Activated CD4-positive, alpha-beta T cell treated with anti-CD3 and anti-CD28 coated beads, Interleukin-2, amount 10 ng/mL, durations not matched to agents 24 days and 14 days (primary cell): ENCODE measurements at regions of chr5 and their contacts with region 1.

Region 1: DNA sequence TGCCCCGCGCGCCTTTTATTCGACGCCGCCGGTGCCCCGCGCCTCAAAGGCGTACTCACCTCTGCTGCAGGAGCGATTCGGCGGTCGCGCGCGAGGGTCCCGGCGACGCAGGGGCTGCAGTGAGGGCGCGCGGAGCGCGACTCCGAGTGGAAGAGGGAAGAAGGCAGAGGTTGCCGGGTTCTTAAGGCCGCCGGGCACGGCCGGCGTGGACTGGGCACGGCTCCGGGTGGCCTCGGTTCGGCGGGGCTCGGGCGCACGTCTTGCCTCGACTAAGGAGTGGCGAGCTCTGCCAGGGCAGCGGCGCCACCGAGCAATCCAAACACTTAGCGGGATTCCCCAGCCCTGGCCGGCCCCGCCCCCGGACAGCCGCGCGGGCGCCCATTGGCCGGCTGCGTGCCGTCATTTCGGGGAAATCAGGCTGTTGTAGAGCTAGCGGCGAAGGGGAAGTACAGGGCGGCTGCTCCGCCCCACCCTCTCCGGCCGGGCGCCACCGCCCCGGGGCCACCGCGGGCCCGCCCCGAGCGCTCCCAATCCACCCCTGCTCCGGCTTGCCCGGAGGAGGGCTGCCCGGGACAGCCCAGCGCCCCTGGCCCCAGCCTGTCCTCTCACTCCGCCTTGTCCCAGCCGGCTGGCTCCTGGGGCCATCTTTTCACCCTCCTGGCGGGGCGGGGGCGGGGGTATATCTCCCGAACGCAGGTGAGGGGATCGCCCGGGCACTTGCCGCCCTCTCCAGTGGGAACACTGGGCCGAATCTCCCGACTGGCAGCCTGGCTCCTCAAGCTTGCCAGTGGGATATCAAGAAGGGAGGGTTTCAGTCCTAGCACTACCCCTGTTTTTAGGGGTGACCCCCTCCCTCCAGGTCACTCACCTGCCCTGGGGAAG is at the start of gene IRF1:
- DNase-seq: peak; percentile 100
- H3K4me3 Mint-ChIP-seq: peak within 1 kb of the TSS; percentile 99
- H3K27ac Mint-ChIP-seq: peak within 1 kb of the TSS; percentile 94
- H3K4me1 Mint-ChIP-seq: peaks cover 70% of the 10 kb centered on the region
- H3K27me3 Mint-ChIP-seq: no peaks in the 10 kb centered on the region
- total RNA-seq, gene IRF1: 167 and 181 TPM in 2 replicates

Region 2: GRCh38 chr5:132044207-132044606 is 446.5 kb before region 1 on chr5:
- intact Hi-C with region 1: no loop called
- DNase-seq: no peak
- H3K4me3 Mint-ChIP-seq: no peak overlapping the region
- H3K27ac Mint-ChIP-seq: no peak overlapping the region
- H3K4me1 Mint-ChIP-seq: peaks cover 10% of the 10 kb centered on the region
- H3K27me3 Mint-ChIP-seq: peaks cover 40% of the 10 kb centered on the region

Region 3: GRCh38 chr5:132114150-132115121 is 376.3 kb before region 1 on chr5:
- intact Hi-C with region 1: loop called (anchors 10 kb)
- DNase-seq: peak; percentile 58
- H3K4me3 Mint-ChIP-seq: peak overlapping the region; percentile 32
- H3K27ac Mint-ChIP-seq: peak overlapping the region; percentile 63
- H3K4me1 Mint-ChIP-seq: peaks cover 56% of the 10 kb centered on the region
- H3K27me3 Mint-ChIP-seq: no peaks in the 10 kb centered on the region

Region 4: GRCh38 chr5:132419502-132420468 is 70.9 kb before region 1 on chr5:
- intact Hi-C with region 1: loop called (anchors 1 kb)
- DNase-seq: peak; percentile 90
- H3K4me3 Mint-ChIP-seq: peak overlapping the region; percentile 72
- H3K27ac Mint-ChIP-seq: peak overlapping the region; percentile 87
- H3K4me1 Mint-ChIP-seq: peaks cover 79% of the 10 kb centered on the region
- H3K27me3 Mint-ChIP-seq: no peaks in the 10 kb centered on the region

Region 5: GRCh38 chr5:132456296-132457001 is 34.3 kb before region 1 on chr5:
- intact Hi-C with region 1: loop called (anchors 5 kb)
- DNase-seq: peak; percentile 90
- H3K4me3 Mint-ChIP-seq: peak overlapping the region; percentile 74
- H3K27ac Mint-ChIP-seq: peak overlapping the region; percentile 99
- H3K4me1 Mint-ChIP-seq: peaks cover 84% of the 10 kb centered on the region
- H3K27me3 Mint-ChIP-seq: no peaks in the 10 kb centered on the region

Region 6: DNA sequence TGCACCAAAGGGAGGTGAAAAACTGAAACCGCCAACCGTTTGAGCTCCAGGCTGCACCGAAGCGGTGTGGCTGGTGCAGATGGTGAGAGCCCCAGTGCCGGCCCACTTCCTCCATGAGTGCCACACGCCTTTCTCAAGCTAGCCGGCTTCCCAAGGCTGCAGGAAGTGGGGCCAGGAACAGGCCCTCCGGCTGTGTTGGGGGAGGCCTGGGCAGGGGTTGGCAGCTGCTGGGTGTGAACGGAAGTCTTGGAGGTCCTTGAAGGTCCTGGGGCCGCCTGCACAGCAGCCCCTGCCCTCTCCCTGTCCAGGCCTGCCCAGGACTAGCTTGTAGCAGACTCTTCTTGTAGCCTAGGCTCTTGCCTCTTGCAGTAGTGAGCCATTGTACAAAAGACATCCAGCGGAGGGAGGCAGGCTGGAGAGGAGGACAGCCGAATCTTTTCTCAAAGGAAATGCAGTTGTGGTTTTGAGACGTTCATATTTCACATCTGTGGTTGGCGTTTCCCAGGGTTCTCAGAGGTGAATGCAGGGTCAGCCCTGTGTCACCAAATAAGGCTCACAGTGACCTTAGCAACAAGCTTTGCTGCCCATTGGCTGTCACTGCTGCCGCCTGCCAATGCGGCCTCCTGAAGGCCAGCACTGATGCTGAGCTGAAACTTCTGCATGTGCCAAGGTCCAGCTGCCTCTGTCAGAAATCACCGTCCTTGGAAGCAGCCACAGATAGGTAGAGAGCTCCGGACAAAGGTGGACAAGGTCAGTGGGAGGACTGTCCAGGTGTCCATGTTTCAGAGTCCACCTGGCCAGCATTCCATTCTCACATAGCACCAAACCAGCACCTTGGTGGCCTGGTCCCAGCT is 24.1 kb before region 1 on chr5:
- intact Hi-C with region 1: loop called (anchors 1 kb)
- DNase-seq: peak; percentile 93
- H3K4me3 Mint-ChIP-seq: peak overlapping the region; percentile 64
- H3K27ac Mint-ChIP-seq: peak overlapping the region; percentile 80
- H3K4me1 Mint-ChIP-seq: peaks cover 81% of the 10 kb centered on the region
- H3K27me3 Mint-ChIP-seq: no peaks in the 10 kb centered on the region

Region 7: DNA sequence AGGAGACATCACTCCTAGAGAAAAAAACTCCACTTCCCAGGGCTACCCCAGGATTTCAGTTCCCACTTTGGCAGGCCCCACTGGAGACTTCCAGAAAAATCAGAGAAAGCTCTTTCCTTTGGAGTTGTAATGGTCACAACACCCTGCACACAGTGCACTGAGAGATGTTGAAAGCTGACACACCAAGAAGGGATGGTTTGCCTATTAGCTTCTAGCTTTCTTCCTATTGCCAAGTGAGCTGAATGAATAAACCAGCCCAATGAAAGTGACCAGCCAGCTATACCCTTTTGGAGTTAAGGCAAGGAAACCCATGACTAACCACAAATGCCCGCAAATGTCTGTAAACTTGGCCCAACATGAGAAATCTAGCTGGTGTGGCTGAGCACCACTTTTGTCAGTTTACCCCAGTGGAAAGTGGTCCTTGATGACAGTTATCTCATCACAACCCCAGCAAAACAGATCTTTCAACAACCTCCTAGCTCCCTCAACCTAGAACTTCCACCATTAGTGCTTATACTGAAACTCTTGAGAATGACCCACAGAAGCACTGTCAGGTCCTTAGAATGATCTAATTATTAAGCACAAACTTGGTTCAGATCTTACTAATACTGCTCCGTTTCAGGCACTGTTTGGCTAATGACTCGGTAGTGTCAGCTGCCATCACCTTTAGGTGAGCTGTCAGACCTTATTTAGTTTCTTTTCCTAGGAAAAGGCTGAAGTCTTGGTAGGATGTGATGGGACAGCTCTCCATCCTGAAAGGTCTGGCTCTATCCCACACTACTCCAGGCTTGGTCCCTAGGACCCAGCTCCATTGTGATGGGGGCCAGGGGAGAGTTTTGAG is 11.4 kb before region 1 on chr5:
- intact Hi-C with region 1: loop called (anchors 1 kb)
- DNase-seq: peak; percentile 72
- H3K4me3 Mint-ChIP-seq: no peak overlapping the region
- H3K27ac Mint-ChIP-seq: peak overlapping the region; percentile 73
- H3K4me1 Mint-ChIP-seq: peaks cover 58% of the 10 kb centered on the region
- H3K27me3 Mint-ChIP-seq: no peaks in the 10 kb centered on the region